Activated CD4-positive, alpha-beta T cell treated with anti-CD3 and anti-CD28 coated beads for 36 hours (primary cell): ENCODE measurements at regions of chr2 and their contacts with region 1.

Region 1: DNA sequence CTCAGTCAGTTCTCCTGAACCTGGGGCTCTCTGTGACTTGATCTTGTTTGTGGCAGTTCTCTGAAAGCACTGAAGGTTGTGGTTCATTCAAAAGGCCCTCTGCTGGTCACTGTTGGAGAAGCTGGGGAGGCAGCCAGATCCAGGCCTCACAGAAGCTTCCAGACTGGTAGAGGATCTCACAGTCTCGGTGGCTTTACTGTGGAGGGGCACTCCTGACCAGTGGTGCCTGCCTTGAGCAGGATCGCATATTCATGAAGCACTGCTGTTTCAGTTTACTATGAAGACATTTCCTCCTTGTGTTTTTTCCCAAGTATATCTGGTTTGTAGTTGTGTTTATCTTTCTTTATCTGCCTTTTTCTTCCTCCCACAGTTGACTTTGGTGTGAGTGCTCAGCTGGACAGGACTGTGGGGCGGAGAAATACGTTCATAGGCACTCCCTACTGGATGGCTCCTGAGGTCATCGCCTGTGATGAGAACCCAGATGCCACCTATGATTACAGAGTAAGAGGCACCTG is 133.9 kb downstream of the MAP4K4 start:
- DNase-seq: peak; percentile 79
- ATAC-seq: peak; percentile 56
- H3K4me3 Mint-ChIP-seq: no peak overlapping the region
- H3K27ac Mint-ChIP-seq: peak overlapping the region; percentile 78
- H3K4me1 Mint-ChIP-seq: peaks cover 56% of the 10 kb centered on the region
- H3K27me3 Mint-ChIP-seq: no peaks in the 10 kb centered on the region

Region 2: GRCh38 chr2:100544911-100545596 is 1286.4 kb before region 1 on chr2:
- CTCF ChIA-PET with region 1: no interaction called
- POLR2A ChIA-PET with region 1: no interaction called
- intact Hi-C with region 1: no loop called
- DNase-seq: no peak
- ATAC-seq: no peak
- H3K4me3 Mint-ChIP-seq: no peak overlapping the region
- H3K27ac Mint-ChIP-seq: no peak overlapping the region
- H3K4me1 Mint-ChIP-seq: peaks cover 4% of the 10 kb centered on the region
- H3K27me3 Mint-ChIP-seq: peaks cover 2% of the 10 kb centered on the region

Region 3: DNA sequence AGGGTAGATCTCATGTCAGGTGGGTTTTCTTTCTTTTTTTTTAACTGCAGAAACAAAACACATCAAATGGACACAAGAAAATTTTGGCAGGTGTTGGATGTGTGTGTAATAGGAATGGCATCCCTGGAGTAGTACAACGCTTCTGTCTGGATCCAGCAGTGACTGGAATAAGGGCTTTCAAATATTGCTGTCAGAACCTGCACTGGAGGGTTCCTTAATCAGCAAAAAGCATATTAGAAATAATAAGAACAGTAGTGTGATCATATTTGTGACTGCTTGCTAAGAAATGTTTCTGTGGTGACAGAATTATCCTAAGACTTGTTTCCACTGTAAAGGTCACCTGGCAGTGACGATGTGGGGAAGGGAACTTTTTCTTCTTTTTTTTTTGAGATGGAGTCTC is 474.9 kb before region 1 on chr2:
- CTCF ChIA-PET with region 1: no interaction called
- POLR2A ChIA-PET with region 1: no interaction called
- intact Hi-C with region 1: no loop called
- DNase-seq: no peak
- ATAC-seq: no peak
- H3K4me3 Mint-ChIP-seq: no peak overlapping the region
- H3K27ac Mint-ChIP-seq: no peak overlapping the region
- H3K4me1 Mint-ChIP-seq: peaks cover 14% of the 10 kb centered on the region
- H3K27me3 Mint-ChIP-seq: no peaks in the 10 kb centered on the region

Region 4: GRCh38 chr2:101473911-101474701 is 357.3 kb before region 1 on chr2:
- CTCF ChIA-PET with region 1: interaction called, 3 read pairs
- POLR2A ChIA-PET with region 1: no interaction called
- intact Hi-C with region 1: loop called in 1 of 2 experiments (anchors 5 kb)
- DNase-seq: peak; percentile 67
- ATAC-seq: peak; percentile 60
- H3K4me3 Mint-ChIP-seq: peak overlapping the region; percentile 75
- H3K27ac Mint-ChIP-seq: peak overlapping the region; percentile 55
- H3K4me1 Mint-ChIP-seq: peaks cover 8% of the 10 kb centered on the region
- H3K27me3 Mint-ChIP-seq: no peaks in the 10 kb centered on the region

Region 5: DNA sequence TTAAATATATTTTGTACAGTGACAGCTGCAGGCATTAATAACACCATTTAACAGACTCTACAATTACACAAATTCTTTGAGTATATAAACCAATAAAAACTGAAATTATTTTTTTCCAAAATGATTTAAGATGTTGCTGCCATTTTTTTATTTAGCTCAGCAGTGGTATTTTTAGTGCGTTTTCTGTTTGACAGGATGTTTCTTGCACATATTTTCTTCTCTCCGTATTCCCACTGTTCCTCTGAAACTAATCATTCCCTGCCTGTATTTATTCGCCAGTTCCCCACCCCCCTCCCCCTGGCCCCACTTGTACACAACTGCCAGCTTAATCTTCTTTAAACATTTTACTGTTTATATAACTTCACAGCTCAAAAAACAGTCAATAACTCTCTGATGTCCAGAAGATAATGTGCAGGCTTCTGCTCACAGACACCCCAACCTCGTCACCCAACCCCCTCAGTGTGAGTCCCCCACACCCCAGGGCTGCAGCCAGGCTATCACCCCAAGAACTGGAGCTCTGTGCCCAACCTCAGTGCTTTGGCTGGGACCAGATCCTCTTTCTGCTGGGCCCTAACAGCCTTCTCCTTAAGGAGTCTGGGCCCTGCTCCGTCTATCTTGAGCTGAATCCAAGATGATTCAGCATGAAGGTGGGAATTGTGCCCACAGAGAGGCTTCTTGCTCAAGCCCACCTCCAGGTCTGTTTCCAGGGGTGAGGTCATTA is 175.5 kb before region 1 on chr2:
- CTCF ChIA-PET with region 1: no interaction called
- POLR2A ChIA-PET with region 1: no interaction called
- intact Hi-C with region 1: loop called in 1 of 2 experiments (anchors 2 kb)
- DNase-seq: no peak
- ATAC-seq: no peak
- H3K4me3 Mint-ChIP-seq: no peak overlapping the region
- H3K27ac Mint-ChIP-seq: no peak overlapping the region
- H3K4me1 Mint-ChIP-seq: peaks cover 22% of the 10 kb centered on the region
- H3K27me3 Mint-ChIP-seq: no peaks in the 10 kb centered on the region

Region 6: DNA sequence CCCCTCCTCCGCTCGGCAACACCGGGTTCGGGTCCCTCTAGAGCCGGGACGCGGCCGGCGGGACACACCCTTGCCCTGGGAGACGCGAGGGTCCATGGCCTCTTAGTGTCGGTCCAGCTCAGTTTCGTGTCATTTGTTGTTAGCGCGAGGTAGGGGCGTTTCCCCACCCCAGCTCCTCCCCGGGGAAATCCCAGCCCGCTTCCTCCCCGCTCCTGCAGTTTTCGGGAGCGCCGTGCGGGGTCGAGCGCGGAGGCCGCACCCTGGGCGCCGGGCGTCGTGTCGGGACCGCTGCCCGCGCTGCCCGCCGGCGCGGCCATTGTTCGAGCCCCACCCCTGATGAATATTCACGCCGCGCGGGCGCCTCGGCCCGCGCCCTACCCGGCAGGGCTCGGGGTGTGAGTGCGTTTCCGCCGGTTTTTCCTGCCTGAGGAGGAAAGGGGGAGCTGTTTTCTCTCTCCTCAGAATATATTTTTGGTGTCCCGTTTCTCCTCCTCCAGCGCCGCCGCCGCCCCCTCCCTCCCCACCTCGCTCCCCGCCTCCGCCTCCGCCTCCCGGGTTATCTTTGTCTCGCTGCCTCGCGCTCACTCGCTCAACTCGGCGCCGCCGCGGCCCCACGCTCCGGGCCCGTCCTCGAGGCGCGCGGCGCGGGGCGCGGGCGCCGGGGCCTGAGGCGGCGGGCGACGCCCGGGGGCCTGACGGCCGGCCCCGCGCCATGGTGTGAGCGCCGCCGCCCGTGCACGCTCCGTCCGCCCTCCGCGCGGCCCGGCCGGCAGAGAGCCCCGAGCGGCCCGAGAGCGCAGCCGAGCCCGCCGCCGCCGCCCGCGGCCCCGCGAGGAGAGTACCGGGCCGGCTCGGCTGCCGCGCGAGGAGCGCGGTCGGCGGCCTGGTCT is 134.0 kb before region 1 on chr2 and contains the start of gene MAP4K4:
- CTCF ChIA-PET with region 1: interaction called, 8 read pairs
- POLR2A ChIA-PET with region 1: no interaction called
- intact Hi-C with region 1: loop called (anchors 2 kb)
- DNase-seq: peak; percentile 85
- ATAC-seq: peak; percentile 52
- H3K4me3 Mint-ChIP-seq: no peak within 1 kb of the TSS
- H3K27ac Mint-ChIP-seq: peak within 1 kb of the TSS; percentile 68
- H3K4me1 Mint-ChIP-seq: peaks cover 30% of the 10 kb centered on the region
- H3K27me3 Mint-ChIP-seq: no peaks in the 10 kb centered on the region
- total RNA-seq, gene MAP4K4: 62.3 to 70.2 TPM

Region 7: GRCh38 chr2:101846973-101847372 is 15.6 kb after region 1 on chr2:
- CTCF ChIA-PET with region 1: interaction called, 11 read pairs
- POLR2A ChIA-PET with region 1: no interaction called
- intact Hi-C with region 1: no loop called
- DNase-seq: no peak
- ATAC-seq: peak; percentile 58
- H3K4me3 Mint-ChIP-seq: no peak overlapping the region
- H3K27ac Mint-ChIP-seq: no peak overlapping the region
- H3K4me1 Mint-ChIP-seq: peaks cover 21% of the 10 kb centered on the region
- H3K27me3 Mint-ChIP-seq: no peaks in the 10 kb centered on the region

Region 8: GRCh38 chr2:102020596-102021181 is 189.3 kb after region 1 on chr2:
- CTCF ChIA-PET with region 1: no interaction called
- POLR2A ChIA-PET with region 1: no interaction called
- intact Hi-C with region 1: no loop called
- DNase-seq: peak; percentile 92
- ATAC-seq: peak; percentile 84
- H3K4me3 Mint-ChIP-seq: no peak overlapping the region
- H3K27ac Mint-ChIP-seq: peak overlapping the region; percentile 68
- H3K4me1 Mint-ChIP-seq: peaks cover 53% of the 10 kb centered on the region
- H3K27me3 Mint-ChIP-seq: peaks cover 2% of the 10 kb centered on the region